Activated CD4-positive, alpha-beta memory T cell treated with anti-CD3 and anti-CD28 coated beads for 36 hours (primary cell): ENCODE measurements at regions of chr11 and their contacts with region 1.

Region 1: DNA sequence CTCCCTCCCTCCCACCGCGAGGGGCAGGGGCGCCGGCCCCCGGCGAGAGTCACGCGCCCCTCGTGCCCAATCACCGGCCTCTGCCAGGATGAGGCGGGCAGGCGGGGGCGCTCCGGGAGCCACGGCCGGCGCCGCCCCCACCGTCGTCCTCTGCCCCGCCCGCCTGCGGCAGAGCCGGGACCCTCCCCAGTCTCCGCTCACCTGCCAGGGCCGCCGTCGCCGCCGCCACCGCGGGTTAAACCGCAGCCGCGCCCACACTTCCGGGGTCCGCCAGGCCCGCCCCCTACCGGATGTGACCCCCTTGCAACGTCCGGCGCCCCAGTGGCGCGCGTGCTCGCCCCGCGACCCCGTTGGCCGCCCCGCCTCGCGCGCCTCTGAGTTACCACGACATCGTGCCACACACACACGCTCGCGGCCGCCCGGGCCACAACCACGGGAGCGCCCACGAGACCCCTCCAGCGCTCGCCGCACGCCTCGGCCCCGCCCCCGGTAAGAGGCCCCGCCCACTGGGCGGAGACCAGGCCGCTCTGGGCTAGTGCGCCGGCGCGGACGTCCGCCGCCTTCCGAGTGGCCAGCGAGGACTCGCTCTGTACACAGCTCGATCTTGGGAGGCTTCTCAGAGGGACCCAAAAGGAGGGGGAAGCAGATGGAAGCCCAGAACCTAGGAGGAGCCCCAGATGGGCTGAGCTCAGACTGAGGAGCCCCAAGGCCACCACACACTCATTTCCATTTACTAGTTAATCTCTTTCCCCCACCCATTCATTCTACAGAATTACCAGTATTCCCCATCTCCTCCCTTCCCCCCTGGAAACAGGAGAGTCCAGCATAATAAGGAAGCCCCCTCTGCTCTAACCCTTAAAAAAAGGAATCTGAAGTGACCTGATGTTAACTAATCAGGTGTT is at the start of gene VPS37C:
- DNase-seq: peak; percentile 94
- H3K4me3 Mint-ChIP-seq: peak within 1 kb of the TSS; percentile 85
- H3K27ac Mint-ChIP-seq: peak within 1 kb of the TSS; percentile 94
- H3K4me1 Mint-ChIP-seq: peaks cover 53% of the 10 kb centered on the region
- H3K27me3 Mint-ChIP-seq: peaks cover 2% of the 10 kb centered on the region
- total RNA-seq, gene VPS37C: 9.0 TPM

Region 2: GRCh38 chr11:60841797-60842667 is 319.4 kb before region 1 on chr11 and contains the start of gene CCDC86:
- CTCF ChIA-PET with region 1: no interaction called
- POLR2A ChIA-PET with region 1: no interaction called
- intact Hi-C with region 1: loop called (anchors 10 kb)
- DNase-seq: peak; percentile 99
- H3K4me3 Mint-ChIP-seq: peak within 1 kb of the TSS; percentile 88
- H3K27ac Mint-ChIP-seq: peak within 1 kb of the TSS; percentile 85
- H3K4me1 Mint-ChIP-seq: peaks cover 36% of the 10 kb centered on the region
- H3K27me3 Mint-ChIP-seq: no peaks in the 10 kb centered on the region
- total RNA-seq, gene CCDC86: 40.6 to 42.1 TPM

Region 3: GRCh38 chr11:60906132-60906972 is 255.1 kb before region 1 on chr11 and contains the start of gene PRPF19:
- CTCF ChIA-PET with region 1: no interaction called
- POLR2A ChIA-PET with region 1: no interaction called
- intact Hi-C with region 1: loop called (anchors 1 kb)
- DNase-seq: peak; percentile 100
- H3K4me3 Mint-ChIP-seq: peak within 1 kb of the TSS; percentile 90
- H3K27ac Mint-ChIP-seq: peak within 1 kb of the TSS; percentile 94
- H3K4me1 Mint-ChIP-seq: peaks cover 36% of the 10 kb centered on the region
- H3K27me3 Mint-ChIP-seq: no peaks in the 10 kb centered on the region
- total RNA-seq, gene PRPF19: 127 to 139 TPM

Region 4: DNA sequence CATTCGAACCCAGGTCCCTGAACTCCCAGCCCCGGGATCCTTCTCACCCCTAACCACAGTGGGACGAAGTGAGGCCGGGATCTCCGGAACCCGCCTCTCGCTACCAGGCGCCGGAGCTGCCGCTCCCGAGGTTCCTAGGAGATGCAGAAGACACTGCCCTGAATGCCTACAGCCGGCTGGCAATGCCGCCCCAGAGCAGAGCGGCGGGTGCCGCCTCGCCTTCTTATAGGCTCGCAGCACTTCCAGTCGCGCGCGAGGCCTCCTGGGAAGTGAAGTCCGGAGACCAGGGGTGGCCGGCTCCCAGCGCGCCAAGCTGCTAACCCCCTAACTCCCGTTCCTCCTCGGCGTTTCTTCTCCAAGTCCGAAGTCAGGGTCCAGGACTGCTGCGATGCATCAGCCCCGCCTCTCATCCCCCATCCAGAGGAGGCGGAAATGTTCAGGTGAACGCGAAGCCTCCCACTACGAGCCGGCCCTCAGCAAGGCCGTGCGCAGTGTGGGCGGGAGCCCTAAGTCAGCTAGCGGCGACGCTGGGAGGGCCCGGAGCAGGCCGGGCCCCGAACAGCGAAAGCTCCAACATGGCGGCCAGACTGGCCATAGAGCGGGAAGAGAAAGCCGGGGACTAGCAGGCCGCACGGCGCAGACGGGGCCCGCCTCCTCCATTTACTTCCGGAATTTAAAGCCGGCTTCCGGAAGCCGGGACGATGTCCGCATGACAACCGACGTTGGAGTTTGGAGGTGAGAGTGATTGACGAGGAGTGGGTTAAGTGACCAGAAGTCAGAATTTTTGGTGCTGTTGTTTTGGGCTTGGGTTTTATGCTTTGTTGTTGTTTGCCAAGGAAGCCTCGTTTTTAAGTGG is 200.5 kb after region 1 on chr11 and contains the starts of genes CYB561A3 and TMEM138:
- CTCF ChIA-PET with region 1: no interaction called
- POLR2A ChIA-PET with region 1: no interaction called
- intact Hi-C with region 1: loop called (anchors 1 kb)
- DNase-seq: peak; percentile 95
- H3K4me3 Mint-ChIP-seq: peak within 1 kb of the TSS; percentile 100
- H3K27ac Mint-ChIP-seq: peak within 1 kb of the TSS; percentile 96
- H3K4me1 Mint-ChIP-seq: peaks cover 32% of the 10 kb centered on the region
- H3K27me3 Mint-ChIP-seq: no peaks in the 10 kb centered on the region
- total RNA-seq, gene CYB561A3: 32.3 to 32.9 TPM
- total RNA-seq, gene TMEM138: 33.7 to 34.6 TPM